ENCODE measurements at regions of chr17 and their contacts with region 1.

Region 1: DNA sequence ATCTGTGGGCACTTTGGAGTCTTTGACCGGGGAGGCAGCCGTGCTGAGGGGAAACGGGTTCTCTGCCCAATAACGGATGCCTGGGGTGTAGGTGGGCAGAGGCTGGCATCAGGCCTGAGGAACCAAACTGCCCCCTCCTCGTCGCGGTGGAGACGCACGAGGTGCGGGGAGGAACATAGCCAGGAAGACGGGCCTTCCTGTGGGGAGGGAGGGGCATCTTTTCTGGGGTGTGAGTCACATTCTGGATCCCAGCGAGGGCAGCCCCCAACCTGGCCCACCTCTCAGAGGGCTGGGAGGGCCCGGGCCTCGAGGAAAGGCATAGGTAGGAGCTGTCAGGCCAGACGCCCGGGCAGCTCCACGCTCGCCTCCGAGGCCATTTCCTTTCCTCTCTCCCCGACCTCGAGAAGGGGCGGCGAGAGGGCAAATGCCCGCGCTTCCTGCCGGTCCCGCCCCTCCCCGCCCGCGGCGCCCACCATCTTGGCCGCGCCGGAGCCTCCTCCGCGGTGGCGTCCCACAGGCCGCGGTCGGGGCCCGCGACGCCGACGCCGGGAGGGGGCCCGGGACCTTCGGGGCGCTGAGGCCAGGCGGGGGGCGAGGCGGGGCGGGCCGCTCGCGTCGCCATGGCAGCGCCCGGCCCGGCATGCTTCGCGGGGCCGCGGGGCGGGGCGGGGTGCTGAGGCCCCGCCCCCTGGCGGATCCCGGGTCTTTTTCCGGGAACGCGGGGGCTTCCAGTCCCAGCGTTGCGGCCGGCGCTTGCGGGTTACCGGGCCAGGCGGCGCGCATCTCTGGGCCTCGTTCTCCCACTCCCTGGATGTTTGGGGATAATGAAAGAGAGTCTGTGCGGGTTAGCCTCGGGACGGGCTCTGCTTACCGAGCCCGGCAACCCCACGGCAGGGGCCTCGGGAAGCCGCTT is 13.2 kb downstream of the RAI1 start:
- DNase-seq: peak; percentile 90
- ATAC-seq: peak; percentile 77

Region 2: DNA sequence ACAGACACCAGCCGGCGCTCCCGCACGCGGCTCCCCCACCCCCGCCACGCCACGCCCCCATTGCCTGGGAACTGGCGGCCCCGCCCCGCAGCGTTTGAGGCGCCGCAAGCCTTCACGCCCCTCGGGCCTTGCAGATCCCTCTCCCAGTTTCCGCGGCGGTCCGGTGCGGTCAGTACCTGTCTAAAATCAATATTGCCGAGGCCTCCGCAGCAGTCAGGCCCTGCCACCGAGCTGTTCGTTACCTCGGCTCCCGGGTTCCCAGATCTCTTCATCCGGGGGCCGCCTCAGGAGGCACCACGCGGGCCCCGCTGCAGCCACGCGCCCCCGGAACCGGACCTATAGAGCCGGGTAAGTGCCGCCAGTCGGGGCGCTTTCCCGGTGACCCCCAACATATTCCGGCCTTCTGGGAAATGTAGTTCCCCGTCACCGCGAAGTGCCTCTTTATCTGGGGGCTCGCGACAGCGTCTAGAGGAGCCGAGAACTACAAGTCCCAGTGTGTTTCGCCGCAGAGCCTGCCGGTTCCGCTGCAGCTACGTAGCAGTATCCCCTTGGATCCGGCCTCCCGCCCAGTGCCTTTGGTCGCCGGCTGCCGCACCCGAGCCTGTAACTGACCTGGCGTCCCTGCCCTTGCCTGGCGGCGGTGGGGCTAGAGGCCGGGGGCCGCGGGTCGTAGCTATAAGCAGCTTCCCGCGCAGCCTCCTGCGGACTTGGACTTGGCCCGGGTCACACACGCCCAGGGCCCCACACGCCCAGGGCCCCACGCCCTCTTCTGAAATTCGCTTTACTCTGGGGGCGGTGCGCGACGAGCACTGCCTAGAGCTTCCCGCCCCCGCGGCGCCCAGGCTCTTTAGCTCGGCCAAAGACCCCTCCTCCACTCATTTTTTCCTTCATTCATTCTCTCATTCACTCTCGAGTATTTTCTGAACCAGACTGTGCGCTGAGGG is 102.8 kb before region 1 on chr17 and contains the start of gene PEMT:
- intact Hi-C with region 1: no loop called
- DNase-seq: peak; percentile 97
- ATAC-seq: peak; percentile 98
- total RNA-seq, gene PEMT: 17.9 TPM

Region 3: GRCh38 chr17:17663160-17664063 is 31.0 kb before region 1 on chr17:
- intact Hi-C with region 1: no loop called
- DNase-seq: peak; percentile 59
- ATAC-seq: peak; percentile 53

Region 4: DNA sequence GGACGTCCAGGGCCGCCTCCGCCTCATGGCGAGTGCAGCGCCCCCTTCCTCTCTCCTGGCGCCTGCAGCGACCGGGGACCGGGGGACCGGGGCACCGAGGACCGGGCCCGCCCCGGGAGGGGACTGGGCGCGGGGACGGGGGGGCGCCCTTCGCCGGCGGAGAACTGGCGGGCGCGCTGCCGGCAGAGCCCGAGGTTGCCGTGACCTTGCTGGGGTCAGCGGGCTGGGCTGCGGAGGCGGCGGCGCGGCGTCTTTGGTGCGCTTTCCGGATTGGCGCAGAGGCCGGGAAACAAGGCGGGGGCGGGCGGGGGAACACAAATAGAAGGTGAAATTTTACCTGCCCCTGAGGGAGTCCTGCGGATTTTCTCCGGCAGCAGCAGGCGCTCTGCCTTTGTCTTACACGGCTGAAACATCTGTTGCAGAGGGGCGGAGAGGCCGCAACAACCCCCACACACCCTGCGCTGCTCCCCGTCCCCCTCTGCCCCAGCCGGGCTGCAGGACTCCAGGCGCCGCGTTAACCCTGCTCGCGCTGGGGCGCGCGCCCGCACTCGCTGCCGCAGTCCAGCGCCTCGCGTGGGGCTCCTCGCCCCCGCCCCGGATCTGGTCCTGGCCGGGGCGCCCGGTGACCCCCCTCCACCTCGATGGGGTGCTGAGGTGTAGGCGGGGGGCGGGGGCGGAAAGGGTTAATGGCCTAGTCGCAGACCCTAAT is 88.8 kb after region 1 on chr17:
- intact Hi-C with region 1: loop called (anchors 10 kb)
- DNase-seq: peak; percentile 85
- ATAC-seq: peak; percentile 58

Measured in left ventricle myocardium superior (tissue), 1 donor.